MCF 10A (cell line): ENCODE measurements at regions of chr15 and their contacts with region 1.

Region 1: DNA sequence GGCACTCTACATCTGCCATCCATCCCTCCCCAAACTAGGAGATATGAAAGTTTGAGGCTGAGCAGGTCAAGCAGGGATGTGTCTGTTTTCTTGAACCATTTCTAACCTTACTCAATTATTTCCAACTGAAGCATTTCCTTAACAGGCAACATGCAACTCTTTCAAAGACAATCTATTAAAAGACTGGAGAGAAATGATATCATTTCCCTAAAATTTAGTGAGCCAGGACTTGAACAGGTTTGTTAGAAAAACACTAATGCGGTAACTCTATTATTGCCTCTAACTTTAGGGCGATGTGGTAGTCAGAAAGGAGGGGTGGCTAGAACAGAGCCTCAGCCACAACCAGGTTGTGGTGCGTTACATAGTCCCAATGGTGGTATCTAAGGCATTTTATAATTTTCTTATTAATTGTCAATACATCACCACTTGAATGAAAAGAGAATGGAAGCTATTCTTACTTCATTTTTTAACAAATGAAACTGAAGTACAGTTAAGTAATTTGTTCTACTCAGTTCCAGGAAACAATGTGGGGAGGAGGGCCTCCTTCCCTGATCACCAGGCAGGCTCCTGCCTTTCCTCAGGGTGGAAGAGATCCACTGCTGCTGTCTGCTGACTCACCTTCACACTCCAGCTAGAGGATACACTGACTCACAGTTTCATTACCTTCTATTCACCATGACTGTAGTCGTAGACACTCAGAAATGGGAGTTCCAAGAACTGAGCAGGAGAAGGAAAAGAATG is 22.8 kb downstream of the MYO1E start:
- DNase-seq: peak; percentile 94
- H3K4me3 Mint-ChIP-seq: peak overlapping the region; percentile 42
- H3K27ac Mint-ChIP-seq: peak overlapping the region; percentile 92
- H3K4me1 Mint-ChIP-seq: peaks cover 33% of the 10 kb centered on the region
- H3K27me3 Mint-ChIP-seq: no peaks in the 10 kb centered on the region
- CTCF ChIP-seq: no peak

Region 2: DNA sequence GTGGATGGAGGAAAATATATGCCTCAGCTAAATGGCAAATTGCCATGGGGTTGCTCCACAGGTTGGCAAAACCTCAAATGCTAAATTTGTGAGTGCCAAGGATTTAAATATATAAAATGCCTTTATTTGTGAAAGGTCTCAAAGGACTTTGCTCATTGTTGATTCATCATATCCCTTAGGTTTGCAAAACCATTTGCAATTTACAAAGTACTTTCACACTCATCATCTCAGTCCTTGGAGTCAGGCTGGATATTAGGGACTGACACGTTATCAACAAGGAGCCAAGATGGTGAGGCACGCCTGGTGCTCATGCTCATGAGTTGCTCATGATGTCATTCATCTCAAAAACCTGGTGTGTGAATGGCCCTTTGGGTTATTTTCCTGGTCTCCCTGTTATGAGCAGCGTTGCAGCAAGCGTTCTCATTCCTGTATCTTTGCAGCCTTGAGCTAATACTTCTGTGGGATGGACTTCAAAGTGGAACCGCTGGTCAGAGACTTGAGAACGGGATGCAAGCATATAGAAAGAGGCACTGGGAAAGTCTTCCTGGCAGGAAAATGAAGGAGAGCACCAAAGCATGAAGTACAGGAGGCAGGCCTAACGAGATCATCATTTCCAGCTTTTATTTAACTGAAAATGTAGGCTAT is 43.2 kb before region 1 on chr15:
- CTCF ChIA-PET with region 1: no interaction called
- POLR2A ChIA-PET with region 1: interaction called, 4 read pairs
- intact Hi-C with region 1: loop called (anchors 5 kb)
- DNase-seq: peak; percentile 89
- H3K4me3 Mint-ChIP-seq: no peak overlapping the region
- H3K27ac Mint-ChIP-seq: no peak overlapping the region
- H3K4me1 Mint-ChIP-seq: peaks cover 28% of the 10 kb centered on the region
- H3K27me3 Mint-ChIP-seq: no peaks in the 10 kb centered on the region
- CTCF ChIP-seq: no peak

Region 3: GRCh38 chr15:59339252-59339672 is 10.6 kb before region 1 on chr15:
- CTCF ChIA-PET with region 1: interaction called, 5 read pairs
- POLR2A ChIA-PET with region 1: interaction called, 13 read pairs
- intact Hi-C with region 1: no loop called
- DNase-seq: peak; percentile 89
- H3K4me3 Mint-ChIP-seq: peak overlapping the region; percentile 52
- H3K27ac Mint-ChIP-seq: peak overlapping the region; percentile 92
- H3K4me1 Mint-ChIP-seq: peaks cover 25% of the 10 kb centered on the region
- H3K27me3 Mint-ChIP-seq: no peaks in the 10 kb centered on the region
- CTCF ChIP-seq: no peak

Region 4: DNA sequence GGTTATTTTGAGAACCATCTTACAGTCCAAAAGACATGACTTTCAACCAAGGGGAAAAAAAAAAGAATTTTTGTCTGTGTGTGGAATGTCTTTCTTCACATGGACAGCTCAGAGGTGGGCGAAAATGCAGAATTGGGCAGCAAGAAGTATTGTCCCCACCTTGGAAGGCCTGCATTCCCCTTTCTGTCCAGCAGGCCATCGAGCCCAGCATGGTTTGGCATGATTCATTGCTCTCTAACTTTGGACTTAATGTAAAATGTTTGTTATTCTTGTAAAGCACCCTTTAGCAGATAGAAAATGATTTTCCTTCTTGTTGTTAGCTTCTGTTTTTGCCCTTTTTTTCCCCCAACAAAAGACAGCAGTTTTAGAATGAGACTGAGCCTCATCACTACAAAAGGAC is 10.5 kb after region 1 on chr15:
- CTCF ChIA-PET with region 1: interaction called, 3 read pairs
- POLR2A ChIA-PET with region 1: interaction called, 16 read pairs
- intact Hi-C with region 1: no loop called
- DNase-seq: no peak
- H3K4me3 Mint-ChIP-seq: no peak overlapping the region
- H3K27ac Mint-ChIP-seq: no peak overlapping the region
- H3K4me1 Mint-ChIP-seq: peaks cover 8% of the 10 kb centered on the region
- H3K27me3 Mint-ChIP-seq: no peaks in the 10 kb centered on the region
- CTCF ChIP-seq: no peak